ENCODE measurements at regions of chr10 and their contacts with region 1.

Region 1: GRCh38 chr10:43138021-43138756 is at the start of gene CSGALNACT2:
- DNase-seq: peak; percentile 92
- H3K4me3 Mint-ChIP-seq: peak within 1 kb of the TSS; percentile 100
- H3K27ac Mint-ChIP-seq: peak within 1 kb of the TSS; percentile 100
- H3K4me1 Mint-ChIP-seq: peaks cover 48% of the 10 kb centered on the region
- H3K27me3 Mint-ChIP-seq: no peaks in the 10 kb centered on the region
- total RNA-seq, gene CSGALNACT2: 30.2 to 32.3 TPM

Region 2: GRCh38 chr10:42638055-42638820 is 500.0 kb before region 1 on chr10 and contains the start of gene ZNF33B:
- CTCF ChIA-PET with region 1: no interaction called
- POLR2A ChIA-PET with region 1: interaction called, 3 read pairs
- intact Hi-C with region 1: loop called (anchors 1 kb)
- DNase-seq: peak; percentile 97
- H3K4me3 Mint-ChIP-seq: peak within 1 kb of the TSS; percentile 94
- H3K27ac Mint-ChIP-seq: peak within 1 kb of the TSS; percentile 98
- H3K4me1 Mint-ChIP-seq: peaks cover 32% of the 10 kb centered on the region
- H3K27me3 Mint-ChIP-seq: no peaks in the 10 kb centered on the region
- total RNA-seq, gene ZNF33B: 6.4 to 7.3 TPM

Region 3: DNA sequence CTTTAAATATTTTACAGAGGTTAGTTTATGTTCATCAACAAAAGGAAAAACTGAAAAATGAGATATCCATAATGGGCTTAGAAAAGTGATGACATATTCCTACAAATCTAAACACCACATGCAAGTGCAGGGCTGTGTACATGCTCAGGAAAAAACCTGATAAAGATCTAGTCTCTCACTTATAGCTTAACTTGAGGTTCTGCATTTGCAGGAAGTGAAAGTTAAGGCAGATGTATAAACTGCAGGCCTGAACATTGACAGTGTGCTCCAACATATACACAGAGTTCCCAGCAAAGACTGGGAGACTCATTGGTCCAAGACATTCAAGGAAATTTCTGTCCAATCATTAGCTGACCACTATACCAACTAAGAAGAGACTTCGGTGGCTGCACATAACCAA is 125.1 kb before region 1 on chr10:
- CTCF ChIA-PET with region 1: no interaction called
- POLR2A ChIA-PET with region 1: no interaction called
- intact Hi-C with region 1: no loop called
- DNase-seq: no peak
- H3K4me3 Mint-ChIP-seq: no peak overlapping the region
- H3K27ac Mint-ChIP-seq: no peak overlapping the region
- H3K4me1 Mint-ChIP-seq: no peaks in the 10 kb centered on the region
- H3K27me3 Mint-ChIP-seq: peaks cover 4% of the 10 kb centered on the region

Region 4: GRCh38 chr10:43120929-43121314 is 17.3 kb before region 1 on chr10:
- CTCF ChIA-PET with region 1: interaction called, 15 read pairs
- POLR2A ChIA-PET with region 1: interaction called, 58 read pairs
- intact Hi-C with region 1: loop called (anchors 1 kb)
- DNase-seq: peak; percentile 89
- H3K4me3 Mint-ChIP-seq: no peak overlapping the region
- H3K27ac Mint-ChIP-seq: peak overlapping the region; percentile 75
- H3K4me1 Mint-ChIP-seq: peaks cover 21% of the 10 kb centered on the region
- H3K27me3 Mint-ChIP-seq: no peaks in the 10 kb centered on the region

Region 5: DNA sequence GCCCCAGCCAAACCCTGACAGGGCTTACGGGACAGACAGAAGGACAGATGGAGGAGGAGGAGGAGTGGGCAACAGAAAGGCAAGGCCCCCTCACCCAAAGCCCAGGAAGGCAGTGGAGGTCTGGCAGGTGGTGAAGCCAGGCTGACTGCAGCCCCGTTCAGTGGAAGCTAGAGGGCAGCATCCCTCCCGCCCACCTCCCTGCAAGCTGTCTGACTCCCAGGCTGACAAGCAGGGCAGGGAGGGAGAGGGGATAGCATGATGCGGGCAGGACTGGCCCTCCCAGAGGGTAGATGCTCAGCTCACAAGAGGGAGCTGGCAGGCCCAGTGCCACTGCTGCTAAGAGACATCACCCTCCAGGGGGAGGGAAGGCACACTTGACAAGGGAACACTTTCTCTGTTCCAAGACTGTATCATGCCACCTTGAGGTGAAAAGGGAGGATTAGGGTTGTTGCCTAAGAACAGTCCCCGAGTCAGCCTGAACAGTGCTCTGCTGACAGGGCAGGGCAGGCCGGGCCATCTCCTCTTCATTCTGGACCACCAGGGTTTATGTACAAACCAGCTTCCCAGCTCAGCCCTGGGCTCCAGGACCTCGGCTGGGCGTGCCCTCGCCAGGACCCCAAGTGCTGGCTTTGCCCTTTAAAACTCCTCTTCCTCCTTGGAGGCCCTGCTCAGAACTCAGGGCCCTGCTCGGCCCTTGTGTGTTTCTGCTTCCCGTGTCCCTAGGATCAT is 66.9 kb after region 1 on chr10:
- CTCF ChIA-PET with region 1: interaction called, 7 read pairs
- POLR2A ChIA-PET with region 1: interaction called, 3 read pairs
- intact Hi-C with region 1: loop called (anchors 1 kb)
- DNase-seq: peak; percentile 76
- H3K4me3 Mint-ChIP-seq: no peak overlapping the region
- H3K27ac Mint-ChIP-seq: no peak overlapping the region
- H3K4me1 Mint-ChIP-seq: peaks cover 6% of the 10 kb centered on the region
- H3K27me3 Mint-ChIP-seq: no peaks in the 10 kb centered on the region

Region 6: DNA sequence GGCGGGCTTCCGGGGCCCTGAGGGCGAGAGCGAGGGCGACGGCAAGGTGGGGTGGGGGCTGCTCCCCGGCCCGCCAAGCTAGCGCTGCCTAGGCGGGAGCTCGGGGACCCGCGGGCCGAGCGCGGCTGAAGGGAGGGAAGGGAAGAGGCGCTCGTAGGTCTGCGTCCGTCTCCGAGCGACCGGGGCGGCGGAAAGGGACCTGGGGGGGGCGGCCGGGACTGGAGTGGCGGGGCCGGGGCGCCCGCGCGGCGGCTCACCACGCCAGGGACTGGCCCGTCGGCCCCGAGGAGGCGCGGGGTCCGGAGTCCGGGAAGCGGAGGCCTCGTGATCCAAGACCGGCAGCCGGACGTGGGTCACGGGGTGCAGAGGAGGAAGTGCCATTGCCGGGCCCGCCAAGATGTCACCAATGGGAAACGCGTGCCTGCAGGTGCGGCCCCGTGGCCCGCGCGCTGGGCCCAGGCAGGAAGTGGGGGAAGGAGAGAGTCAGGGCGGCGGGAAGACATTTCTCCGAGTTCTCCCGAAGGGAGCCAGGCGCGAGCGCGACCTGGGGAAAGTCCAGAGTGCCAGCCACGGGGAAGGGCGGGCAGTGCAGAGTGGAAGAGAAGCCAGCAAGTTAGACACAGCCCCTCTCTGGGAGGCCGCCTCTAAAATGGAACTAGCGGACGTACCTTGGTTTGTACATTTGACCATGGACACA is 258.9 kb after region 1 on chr10:
- CTCF ChIA-PET with region 1: interaction called, 3 read pairs
- POLR2A ChIA-PET with region 1: interaction called, 18 read pairs
- intact Hi-C with region 1: loop called (anchors 2 kb)
- DNase-seq: peak; percentile 92
- H3K4me3 Mint-ChIP-seq: peak overlapping the region; percentile 81
- H3K27ac Mint-ChIP-seq: peak overlapping the region; percentile 100
- H3K4me1 Mint-ChIP-seq: peaks cover 63% of the 10 kb centered on the region
- H3K27me3 Mint-ChIP-seq: no peaks in the 10 kb centered on the region

Region 7: DNA sequence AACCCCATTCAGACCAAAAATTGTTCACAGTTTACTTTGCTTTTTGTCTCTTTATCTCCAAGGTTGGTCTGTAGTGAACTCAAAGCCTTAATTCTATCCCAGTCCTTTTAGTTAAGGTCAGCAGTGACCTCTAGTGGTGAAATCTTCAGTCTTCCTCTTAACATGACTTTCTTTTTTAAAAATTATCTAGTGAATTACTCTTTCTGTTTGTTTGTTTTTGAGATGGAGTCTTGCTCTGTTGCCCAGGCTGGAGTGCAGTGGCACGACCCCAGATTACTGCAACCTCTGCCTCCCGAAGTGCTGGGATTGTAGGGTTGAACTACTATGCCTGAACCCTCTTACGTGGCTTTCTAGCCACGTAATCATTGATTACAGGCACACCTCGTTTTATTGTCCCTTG is 323.8 kb after region 1 on chr10:
- CTCF ChIA-PET with region 1: no interaction called
- POLR2A ChIA-PET with region 1: no interaction called
- intact Hi-C with region 1: no loop called
- DNase-seq: no peak
- H3K4me3 Mint-ChIP-seq: no peak overlapping the region
- H3K27ac Mint-ChIP-seq: peak overlapping the region; percentile 54
- H3K4me1 Mint-ChIP-seq: peaks cover 18% of the 10 kb centered on the region
- H3K27me3 Mint-ChIP-seq: no peaks in the 10 kb centered on the region